IMR-90 (cell line): ENCODE measurements at regions of chr3 and their contacts with region 1.

Region 1: DNA sequence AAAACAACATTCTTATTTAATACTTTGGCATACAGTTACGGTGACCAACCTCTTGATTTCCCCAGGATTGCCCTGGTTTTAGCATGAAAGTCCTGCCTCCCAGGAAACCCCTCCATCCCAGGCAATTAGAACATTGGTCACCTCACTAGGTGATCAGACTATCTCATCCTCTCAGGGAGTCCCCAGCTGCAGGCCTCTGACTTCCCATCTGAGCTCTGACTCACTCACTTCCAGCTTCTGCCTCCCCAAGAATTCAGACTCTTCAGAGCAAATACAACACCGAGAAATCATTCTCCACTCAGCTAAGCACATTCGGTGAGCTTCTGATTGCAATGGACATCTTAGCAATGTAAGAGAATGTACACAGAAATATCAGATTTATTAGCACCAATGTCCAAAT is 92.4 kb upstream of the HES1 start:
- DNase-seq: peak; percentile 73
- ATAC-seq: peak; percentile 82
- H3K4me3 ChIP-seq: no peak overlapping the region
- H3K27ac ChIP-seq: no peak overlapping the region
- H3K4me1 ChIP-seq: no peaks in the 10 kb centered on the region
- H3K27me3 ChIP-seq: peaks cover 20% of the 10 kb centered on the region
- CTCF ChIP-seq: no peak
- POLR2A ChIP-seq: no peak
- RAD21 ChIP-seq: no peak

Region 2: GRCh38 chr3:192570821-192571791 is 1472.4 kb before region 1 on chr3:
- CTCF ChIA-PET with region 1: no interaction called
- POLR2A ChIA-PET with region 1: no interaction called
- dilution Hi-C with region 1: no loop called
- in situ Hi-C with region 1: no loop called
- intact Hi-C with region 1: no loop called
- DNase-seq: peak; percentile 32
- ATAC-seq: peak; percentile 65
- H3K4me3 ChIP-seq: peak overlapping the region; percentile 26; the same call in 1 of the 2 replicates
- H3K27ac ChIP-seq: no peak overlapping the region
- H3K4me1 ChIP-seq: no peaks in the 10 kb centered on the region
- H3K27me3 ChIP-seq: no peaks in the 10 kb centered on the region
- CTCF ChIP-seq: no peak
- POLR2A ChIP-seq: no peak
- RAD21 ChIP-seq: no peak

Region 3: GRCh38 chr3:194009892-194010533 is 33.5 kb before region 1 on chr3:
- CTCF ChIA-PET with region 1: no interaction called
- POLR2A ChIA-PET with region 1: no interaction called
- dilution Hi-C with region 1: no loop called
- in situ Hi-C with region 1: no loop called
- intact Hi-C with region 1: no loop called
- DNase-seq: no peak
- ATAC-seq: no peak
- H3K4me3 ChIP-seq: no peak overlapping the region
- H3K27ac ChIP-seq: no peak overlapping the region
- H3K4me1 ChIP-seq: no peaks in the 10 kb centered on the region
- H3K27me3 ChIP-seq: peaks cover 53% of the 10 kb centered on the region
- CTCF ChIP-seq: no peak
- POLR2A ChIP-seq: no peak
- RAD21 ChIP-seq: no peak

Region 4: GRCh38 chr3:194089357-194090177 is 46.1 kb after region 1 on chr3:
- CTCF ChIA-PET with region 1: interaction called, 3 read pairs
- POLR2A ChIA-PET with region 1: no interaction called
- dilution Hi-C with region 1: no loop called
- in situ Hi-C with region 1: no loop called
- intact Hi-C with region 1: loop called (anchors 2 kb)
- DNase-seq: peak; percentile 97
- ATAC-seq: peak; percentile 87
- H3K4me3 ChIP-seq: no peak overlapping the region
- H3K27ac ChIP-seq: peak overlapping the region; percentile 13; the same call in 1 of the 2 replicates
- H3K4me1 ChIP-seq: peaks cover 5% of the 10 kb centered on the region; the same call in 1 of the 2 replicates
- H3K27me3 ChIP-seq: peaks cover 9% of the 10 kb centered on the region
- CTCF ChIP-seq: no peak
- POLR2A ChIP-seq: peak; percentile 46; the same call in 1 of the 2 replicates
- RAD21 ChIP-seq: no peak